Astrocyte of the cerebellum (primary cell): ENCODE measurements at regions of chr1 and their contacts with region 1.

Region 1: DNA sequence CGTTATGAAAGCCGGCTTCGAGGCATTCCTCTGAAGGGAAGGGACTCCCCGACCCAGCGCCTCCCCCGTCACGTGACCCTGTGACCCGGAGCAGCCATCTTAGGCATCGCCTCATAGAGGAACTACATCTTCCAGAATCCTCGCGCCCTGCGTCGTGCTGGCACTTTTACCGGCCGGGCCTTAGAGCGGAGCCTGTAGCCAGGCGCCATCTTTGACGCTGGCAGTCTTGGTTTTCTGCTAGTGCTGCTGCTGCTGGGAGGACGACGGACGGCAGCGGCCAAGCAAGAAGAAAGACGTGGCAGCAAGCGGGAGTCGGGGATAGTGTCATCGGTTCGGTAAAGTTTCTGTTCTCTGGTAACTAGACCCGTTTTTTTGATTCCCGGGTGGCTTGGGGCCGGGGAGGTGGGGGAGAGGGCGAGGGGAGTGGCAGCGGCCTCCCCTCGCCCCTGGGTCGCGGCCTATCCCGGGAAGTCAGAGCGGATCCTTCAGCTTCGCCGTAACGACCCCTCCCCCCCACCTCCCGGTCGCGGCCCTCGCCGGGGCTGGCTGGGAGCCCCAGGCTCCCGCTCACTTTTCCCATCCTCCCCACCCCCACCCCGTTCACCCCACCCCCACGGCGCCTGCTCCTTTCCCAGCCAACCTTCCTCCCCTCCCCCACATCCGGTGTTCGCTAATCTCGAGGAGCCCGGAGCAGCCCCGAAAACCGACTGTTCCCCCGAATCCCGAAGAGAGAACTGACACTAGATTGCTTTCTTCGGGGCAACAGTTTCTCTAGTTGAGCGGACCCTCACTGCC is at the starts of genes ZBED6 and ZC3H11A:
- DNase-seq: peak; percentile 96
- H3K4me3 ChIP-seq: peak within 1 kb of the TSS; percentile 58
- CTCF ChIP-seq: no peak

Region 2: DNA sequence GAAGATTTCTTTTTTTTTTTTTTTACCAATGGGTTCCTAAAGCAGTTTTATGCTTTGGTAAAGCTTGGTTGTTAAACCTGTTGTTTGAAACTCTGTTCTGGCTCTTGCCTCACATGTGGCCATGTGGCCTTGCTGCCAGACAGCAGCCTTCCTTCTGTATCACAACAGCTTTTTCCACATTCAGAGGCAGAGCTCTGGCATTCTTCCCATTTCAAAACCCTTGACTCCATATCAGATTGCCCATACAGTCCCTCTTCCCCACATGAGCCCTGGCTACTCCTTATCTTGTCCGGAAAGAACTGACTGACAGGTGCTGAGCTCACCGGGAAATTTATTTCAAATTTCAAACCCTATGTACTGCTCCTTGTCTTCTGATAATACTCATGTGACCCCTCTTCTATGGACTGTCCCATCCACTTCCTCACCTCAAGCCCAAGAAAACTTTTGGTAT is 69.2 kb before region 1 on chr1:
- in situ Hi-C with region 1: loop called (anchors 5 kb)
- DNase-seq: no peak
- H3K4me3 ChIP-seq: no peak overlapping the region
- CTCF ChIP-seq: no peak

Region 3: DNA sequence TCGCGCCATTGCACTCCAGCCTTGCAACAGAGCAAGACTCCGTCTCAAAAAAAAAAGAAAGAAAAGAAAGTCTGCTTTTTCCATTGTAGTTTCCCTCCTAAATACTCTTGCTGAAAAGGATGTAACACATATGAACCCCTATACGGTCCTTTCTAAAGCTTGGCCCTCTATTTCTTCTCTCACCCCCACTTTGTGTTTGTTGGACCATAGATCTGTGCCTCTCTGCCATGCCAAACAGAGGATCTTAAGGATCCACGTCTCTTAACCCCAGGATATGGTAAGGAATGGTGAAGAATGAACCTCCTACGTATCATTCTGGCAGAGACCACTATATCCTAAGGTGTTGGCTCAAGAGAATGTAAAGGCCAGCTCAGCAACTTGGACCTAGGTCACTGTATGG is 49.4 kb before region 1 on chr1:
- in situ Hi-C with region 1: loop called (anchors 5 kb)
- DNase-seq: no peak
- H3K4me3 ChIP-seq: no peak overlapping the region
- CTCF ChIP-seq: no peak